ENCODE measurements at regions of chr1 and their contacts with region 1.

Region 1: GRCh38 chr1:180178511-180179161 is 24.0 kb downstream of the QSOX1 start:
- DNase-seq: peak; percentile 86
- H3K4me3 ChIP-seq: no peak overlapping the region
- H3K27ac ChIP-seq: no peak overlapping the region
- H3K4me1 ChIP-seq: peaks cover 0 to 14% (median 7%) of the 10 kb centered on the region in 6 donors
- H3K27me3 ChIP-seq: no peaks in the 10 kb centered on the region
- CTCF ChIP-seq: peak; percentile 81 to 96 (median 92)
- POLR2A ChIP-seq: no peak

Region 2: GRCh38 chr1:179706339-179706941 is 472.2 kb before region 1 on chr1:
- intact Hi-C with region 1: loop called (anchors 10 kb)
- DNase-seq: no peak
- H3K4me3 ChIP-seq: no peak overlapping the region
- H3K27ac ChIP-seq: no peak overlapping the region
- H3K4me1 ChIP-seq: peaks cover 8 to 26% (median 18%) of the 10 kb centered on the region in 6 donors
- H3K27me3 ChIP-seq: no peaks in the 10 kb centered on the region
- CTCF ChIP-seq: peak; percentile 29 to 75 (median 57)
- POLR2A ChIP-seq: no peak

Region 3: DNA sequence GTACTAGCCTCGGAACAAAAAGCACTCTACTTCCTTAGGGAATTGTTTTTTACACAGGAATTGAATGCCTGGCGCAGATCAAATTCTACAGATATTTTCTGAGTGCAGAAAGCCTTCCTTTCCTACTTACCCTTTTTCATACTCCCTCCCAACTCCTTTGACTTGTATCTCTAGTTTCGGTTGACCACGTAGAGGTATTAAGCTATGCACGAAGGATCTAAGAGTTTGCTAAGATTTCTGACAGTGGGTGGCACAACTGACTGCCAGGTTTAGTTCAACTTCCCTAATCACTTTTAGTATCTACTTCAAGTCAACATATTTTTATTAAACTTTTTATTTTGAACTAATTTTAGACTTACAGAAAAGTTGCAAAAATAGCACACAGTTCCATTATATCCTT is 306.1 kb before region 1 on chr1:
- intact Hi-C with region 1: loop called (anchors 5 kb)
- DNase-seq: no peak
- H3K4me3 ChIP-seq: no peak overlapping the region
- H3K27ac ChIP-seq: peak overlapping the region in 1 of 8 donors; percentile 15
- H3K4me1 ChIP-seq: peaks cover 14 to 83% (median 55%) of the 10 kb centered on the region in 6 donors
- H3K27me3 ChIP-seq: no peaks in the 10 kb centered on the region
- CTCF ChIP-seq: no peak
- POLR2A ChIP-seq: no peak

Region 4: DNA sequence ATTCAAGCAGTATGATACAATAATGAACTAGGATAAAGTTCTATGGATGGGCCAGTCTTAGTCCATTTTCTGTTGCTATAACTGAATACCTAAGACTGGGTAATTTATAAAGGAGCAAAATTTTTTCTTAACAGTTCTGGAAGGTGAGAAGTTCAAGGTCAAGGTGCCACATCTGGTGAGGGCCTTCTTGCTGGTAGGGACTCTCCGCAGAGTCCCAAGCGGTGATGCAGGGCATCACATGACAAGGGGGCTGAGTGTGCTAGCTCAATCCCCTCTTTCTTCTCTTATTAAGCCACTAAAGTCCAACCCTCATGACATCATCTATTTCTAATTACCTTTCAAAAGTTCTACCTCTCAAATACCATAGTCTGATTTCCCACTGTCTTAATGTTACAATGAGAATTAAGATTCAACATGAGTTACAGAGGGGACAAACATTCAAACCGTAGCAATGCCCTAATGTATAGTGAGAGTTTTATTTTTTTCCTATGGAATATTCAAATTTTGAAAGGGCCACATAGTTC is 116.1 kb before region 1 on chr1:
- intact Hi-C with region 1: no loop called
- DNase-seq: no peak
- H3K4me3 ChIP-seq: no peak overlapping the region
- H3K27ac ChIP-seq: no peak overlapping the region
- H3K4me1 ChIP-seq: peaks cover 0 to 4% (median 0%) of the 10 kb centered on the region in 6 donors
- H3K27me3 ChIP-seq: no peaks in the 10 kb centered on the region
- CTCF ChIP-seq: no peak
- POLR2A ChIP-seq: no peak

Region 5: GRCh38 chr1:180116964-180117763 is 61.5 kb before region 1 on chr1:
- intact Hi-C with region 1: no loop called
- DNase-seq: no peak
- H3K4me3 ChIP-seq: no peak overlapping the region
- H3K27ac ChIP-seq: peak overlapping the region in 1 of 8 donors; percentile 6
- H3K4me1 ChIP-seq: peaks cover 0 to 16% (median 3%) of the 10 kb centered on the region in 6 donors
- H3K27me3 ChIP-seq: no peaks in the 10 kb centered on the region
- CTCF ChIP-seq: no peak
- POLR2A ChIP-seq: no peak